Activated CD8-positive, alpha-beta T cell treated with anti-CD3 and anti-CD28 coated beads for 36 hours (primary cell): ENCODE measurements at regions of chr2 and their contacts with region 1.

Region 1: GRCh38 chr2:201860636-201861066 is 54.3 kb downstream of the CDK15 start:
- DNase-seq: peak; percentile 49
- ATAC-seq: peak; percentile 83
- H3K4me3 Mint-ChIP-seq: no peak overlapping the region
- H3K27ac Mint-ChIP-seq: no peak overlapping the region
- H3K4me1 Mint-ChIP-seq: peaks cover 15% of the 10 kb centered on the region
- H3K27me3 Mint-ChIP-seq: peaks cover 29% of the 10 kb centered on the region
- CTCF ChIP-seq: peak; percentile 67

Region 2: GRCh38 chr2:199940373-199940772 is 1920.3 kb before region 1 on chr2:
- CTCF ChIA-PET with region 1: no interaction called
- POLR2A ChIA-PET with region 1: no interaction called
- intact Hi-C with region 1: loop called (anchors 10 kb)
- DNase-seq: peak; percentile 9
- ATAC-seq: peak; percentile 80
- H3K4me3 Mint-ChIP-seq: no peak overlapping the region
- H3K27ac Mint-ChIP-seq: no peak overlapping the region
- H3K4me1 Mint-ChIP-seq: peaks cover 5% of the 10 kb centered on the region
- H3K27me3 Mint-ChIP-seq: no peaks in the 10 kb centered on the region
- CTCF ChIP-seq: peak; percentile 25

Region 3: DNA sequence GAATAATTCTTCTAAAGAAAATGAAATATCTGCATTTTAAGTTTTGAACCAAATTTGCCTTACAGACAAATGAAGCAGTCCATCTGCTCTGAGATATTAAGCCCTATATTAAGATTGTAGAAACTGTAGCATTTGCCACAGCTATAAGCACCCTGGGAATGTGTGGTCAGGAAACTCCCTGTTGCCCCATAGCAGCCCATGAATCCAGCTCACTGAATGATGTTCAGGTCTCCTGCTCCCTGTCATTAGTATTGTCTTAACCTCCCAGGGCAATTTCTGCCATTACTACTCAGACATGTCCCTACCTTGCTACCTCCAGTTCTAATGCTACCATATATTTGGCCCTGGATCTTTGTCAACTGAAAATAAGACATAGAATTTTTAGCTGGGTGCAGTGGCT is 13.2 kb before region 1 on chr2:
- CTCF ChIA-PET with region 1: interaction called, 14 read pairs
- POLR2A ChIA-PET with region 1: no interaction called
- intact Hi-C with region 1: no loop called
- DNase-seq: no peak
- ATAC-seq: no peak
- H3K4me3 Mint-ChIP-seq: no peak overlapping the region
- H3K27ac Mint-ChIP-seq: no peak overlapping the region
- H3K4me1 Mint-ChIP-seq: no peaks in the 10 kb centered on the region
- H3K27me3 Mint-ChIP-seq: peaks cover 5% of the 10 kb centered on the region
- CTCF ChIP-seq: no peak

Region 4: GRCh38 chr2:201926067-201926466 is 65.4 kb after region 1 on chr2:
- CTCF ChIA-PET with region 1: no interaction called
- POLR2A ChIA-PET with region 1: no interaction called
- intact Hi-C with region 1: no loop called
- DNase-seq: no peak
- ATAC-seq: no peak
- H3K4me3 Mint-ChIP-seq: no peak overlapping the region
- H3K27ac Mint-ChIP-seq: no peak overlapping the region
- H3K4me1 Mint-ChIP-seq: no peaks in the 10 kb centered on the region
- H3K27me3 Mint-ChIP-seq: peaks cover 4% of the 10 kb centered on the region
- CTCF ChIP-seq: no peak

Region 5: DNA sequence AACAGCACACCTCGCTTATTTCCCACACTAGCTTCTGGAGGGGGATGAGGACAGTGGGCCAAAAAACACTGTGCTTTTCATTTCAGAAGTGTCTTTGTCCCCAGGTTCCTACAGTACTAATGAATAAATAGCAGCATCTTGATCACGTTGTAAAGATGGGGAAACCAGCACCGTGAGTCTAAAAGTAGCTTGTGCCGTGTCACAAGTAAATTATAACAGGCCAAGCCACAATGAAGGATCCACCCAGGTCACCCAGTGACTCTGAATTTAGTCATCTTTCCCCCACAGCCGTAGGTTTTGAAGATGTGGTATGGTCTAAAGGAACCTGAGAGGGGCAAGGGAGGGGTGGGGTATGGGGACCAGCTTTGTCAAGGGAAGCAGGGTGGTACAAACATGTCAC is 181.8 kb after region 1 on chr2:
- CTCF ChIA-PET with region 1: interaction called, 12 read pairs
- POLR2A ChIA-PET with region 1: no interaction called
- intact Hi-C with region 1: no loop called
- DNase-seq: no peak
- ATAC-seq: no peak
- H3K4me3 Mint-ChIP-seq: no peak overlapping the region
- H3K27ac Mint-ChIP-seq: no peak overlapping the region
- H3K4me1 Mint-ChIP-seq: no peaks in the 10 kb centered on the region
- H3K27me3 Mint-ChIP-seq: peaks cover 54% of the 10 kb centered on the region
- CTCF ChIP-seq: no peak

Region 6: DNA sequence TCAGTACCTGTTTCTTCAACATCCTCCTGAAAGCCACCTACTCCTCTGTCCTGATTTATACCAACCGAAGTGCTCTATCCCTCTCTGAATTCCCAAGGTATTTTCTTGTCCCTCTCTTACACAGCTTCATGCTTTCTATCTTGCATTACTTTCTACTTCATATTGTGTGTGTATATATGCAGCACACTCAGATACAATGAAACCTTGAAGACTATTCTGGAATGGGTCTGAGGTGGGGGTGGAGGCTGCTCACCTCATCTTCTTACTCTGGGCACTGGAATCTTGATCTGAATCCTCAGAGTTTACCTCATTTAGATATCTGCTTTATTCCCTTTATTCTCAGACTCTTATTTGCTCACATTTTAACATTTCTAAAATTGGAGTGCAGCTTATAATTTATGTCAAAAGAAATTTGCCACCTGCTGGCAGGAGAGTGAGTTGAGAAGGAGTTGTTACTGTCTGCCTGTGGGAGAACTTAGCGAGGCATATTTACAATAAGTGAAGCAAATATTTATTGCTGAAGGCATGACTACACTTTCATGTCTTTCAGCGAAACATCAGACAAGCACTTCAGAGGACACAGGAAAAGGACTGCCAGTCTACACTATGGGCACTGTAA is 195.8 kb after region 1 on chr2:
- CTCF ChIA-PET with region 1: interaction called, 4 read pairs
- POLR2A ChIA-PET with region 1: no interaction called
- intact Hi-C with region 1: loop called (anchors 10 kb)
- DNase-seq: no peak
- ATAC-seq: no peak
- H3K4me3 Mint-ChIP-seq: no peak overlapping the region
- H3K27ac Mint-ChIP-seq: no peak overlapping the region
- H3K4me1 Mint-ChIP-seq: no peaks in the 10 kb centered on the region
- H3K27me3 Mint-ChIP-seq: peaks cover 33% of the 10 kb centered on the region
- CTCF ChIP-seq: peak; percentile 25

Region 7: DNA sequence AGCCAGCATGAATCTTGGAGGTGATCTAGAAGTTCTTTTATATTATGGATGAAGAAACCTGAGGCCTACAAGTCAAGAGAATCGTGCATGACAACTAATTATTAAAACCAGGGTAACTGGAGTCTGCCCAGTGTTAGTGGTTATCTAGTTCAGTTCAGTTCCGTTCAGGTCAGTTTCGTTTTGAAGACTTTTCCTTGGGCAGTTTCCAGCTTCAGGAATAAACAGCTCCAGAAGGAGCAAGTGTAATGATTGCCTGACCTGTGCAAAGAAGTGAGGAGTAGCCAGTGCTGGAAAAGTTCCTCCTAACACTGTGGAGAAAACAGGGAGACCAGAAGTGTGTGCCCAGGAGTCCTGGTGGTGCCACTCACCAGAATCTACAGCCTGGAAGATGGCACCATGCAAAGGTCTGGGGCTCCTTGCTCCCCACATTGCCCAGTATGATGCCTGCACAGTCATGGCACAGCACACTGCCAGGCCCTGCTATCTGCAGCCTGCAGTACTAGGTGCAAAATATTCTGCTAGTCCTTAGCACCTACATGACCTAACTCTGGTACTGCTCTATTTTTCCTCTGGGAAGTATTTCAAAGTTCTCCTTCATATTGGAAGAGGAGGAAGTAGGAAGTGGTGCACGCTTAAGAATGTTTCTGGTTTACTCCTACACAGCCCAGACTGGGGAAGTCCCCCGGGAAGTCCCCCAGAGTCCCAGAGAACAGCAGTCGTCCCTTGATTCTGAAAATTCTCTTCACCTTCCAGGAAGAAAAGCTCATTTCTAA is 312.0 kb after region 1 on chr2:
- CTCF ChIA-PET with region 1: interaction called, 42 read pairs
- POLR2A ChIA-PET with region 1: no interaction called
- intact Hi-C with region 1: no loop called
- DNase-seq: peak; percentile 79
- ATAC-seq: peak; percentile 85
- H3K4me3 Mint-ChIP-seq: no peak overlapping the region
- H3K27ac Mint-ChIP-seq: peak overlapping the region; percentile 68
- H3K4me1 Mint-ChIP-seq: peaks cover 34% of the 10 kb centered on the region
- H3K27me3 Mint-ChIP-seq: peaks cover 13% of the 10 kb centered on the region
- CTCF ChIP-seq: no peak

Region 8: DNA sequence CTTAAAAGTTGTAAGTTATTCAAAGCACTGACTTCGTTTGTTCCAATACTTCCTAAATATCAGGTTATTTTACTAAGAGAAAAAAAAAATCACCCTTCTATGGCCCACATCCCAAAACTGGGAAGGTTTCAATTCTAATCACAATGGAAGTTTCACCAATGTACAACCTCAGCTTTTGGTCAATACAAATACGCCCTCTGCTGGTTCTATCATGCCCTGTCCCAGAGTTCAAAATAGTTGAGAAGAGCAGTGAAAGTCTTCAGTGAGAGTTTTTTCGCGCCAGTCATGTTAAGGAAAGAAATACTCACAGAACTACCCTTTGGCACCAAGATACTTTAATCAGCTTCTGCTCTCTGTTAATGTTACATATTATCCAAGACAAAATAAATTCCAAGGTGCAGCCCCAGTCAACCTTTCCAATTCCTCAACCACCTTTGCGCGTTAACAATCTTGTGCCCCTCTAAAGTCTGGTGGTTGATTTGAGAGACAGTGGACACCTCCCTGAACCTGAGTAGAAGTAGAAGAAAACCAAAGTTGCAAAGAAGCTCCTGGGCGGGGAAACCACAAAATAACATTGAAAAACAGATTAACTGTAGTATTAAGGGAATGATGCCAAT is 317.8 kb after region 1 on chr2:
- CTCF ChIA-PET with region 1: interaction called, 42 read pairs
- POLR2A ChIA-PET with region 1: no interaction called
- intact Hi-C with region 1: loop called (anchors 2 kb)
- DNase-seq: peak; percentile 71
- ATAC-seq: peak; percentile 67
- H3K4me3 Mint-ChIP-seq: no peak overlapping the region
- H3K27ac Mint-ChIP-seq: no peak overlapping the region
- H3K4me1 Mint-ChIP-seq: peaks cover 4% of the 10 kb centered on the region
- H3K27me3 Mint-ChIP-seq: peaks cover 3% of the 10 kb centered on the region
- CTCF ChIP-seq: peak; percentile 94